ENCODE measurements at regions of chr3 and their contacts with region 1.

Region 1: GRCh38 chr3:125179143-125179883 is 33.2 kb downstream of the SLC12A8 start:
- DNase-seq: no peak
- H3K4me3 ChIP-seq: no peak overlapping the region
- H3K27ac ChIP-seq: no peak overlapping the region
- H3K4me1 ChIP-seq: peaks cover 0 to 8% (median 3%) of the 10 kb centered on the region in 4 experiments; a peak in 4 of 7 replicates
- H3K27me3 ChIP-seq: no peaks in the 10 kb centered on the region
- CTCF ChIP-seq: no peak
- EP300 ChIP-seq: no peak
- POLR2A ChIP-seq: no peak
- RAD21 ChIP-seq: no peak

Region 2: GRCh38 chr3:125129512-125129962 is 49.8 kb before region 1 on chr3:
- CTCF ChIA-PET with region 1: no interaction called
- POLR2A ChIA-PET with region 1: no interaction called
- DNase-seq: no peak
- H3K4me3 ChIP-seq: no peak overlapping the region
- H3K27ac ChIP-seq: no peak overlapping the region
- H3K4me1 ChIP-seq: peaks cover 0 to 3% (median 1%) of the 10 kb centered on the region in 4 experiments; a peak in 1 of 7 replicates
- H3K27me3 ChIP-seq: no peaks in the 10 kb centered on the region
- CTCF ChIP-seq: no peak
- EP300 ChIP-seq: no peak
- POLR2A ChIP-seq: no peak
- RAD21 ChIP-seq: no peak

Region 3: GRCh38 chr3:125192190-125193035 is 13.1 kb after region 1 on chr3:
- CTCF ChIA-PET with region 1: interaction called, 10 read pairs
- POLR2A ChIA-PET with region 1: no interaction called
- DNase-seq: no peak
- H3K4me3 ChIP-seq: no peak overlapping the region
- H3K27ac ChIP-seq: no peak overlapping the region; the same call in 1 of the 2 replicates
- H3K4me1 ChIP-seq: peaks cover 0 to 10% (median 6%) of the 10 kb centered on the region in 4 experiments; a peak in 6 of 7 replicates
- H3K27me3 ChIP-seq: no peaks in the 10 kb centered on the region
- CTCF ChIP-seq: peak; percentile 34 to 42 (median 40); a peak in 3 of 4 replicates
- EP300 ChIP-seq: no peak
- POLR2A ChIP-seq: no peak
- RAD21 ChIP-seq: peak in 1 of 2 experiments; percentile 51; a peak in 2 of 4 replicates

Measured in H1 (cell line).